Panc1 (cell line): ENCODE measurements at regions of chr10 and their contacts with region 1.

Region 1: GRCh38 chr10:50896721-50897120 is 11.3 kb upstream of the A1CF start:
- DNase-seq: no peak
- ATAC-seq: no peak
- H3K4me3 ChIP-seq: no peak overlapping the region
- H3K27ac ChIP-seq: no peak overlapping the region
- H3K4me1 ChIP-seq: no peaks in the 10 kb centered on the region
- H3K27me3 ChIP-seq: no peaks in the 10 kb centered on the region; the same call in 1 of the 2 replicates
- CTCF ChIP-seq: no peak

Region 2: GRCh38 chr10:50851884-50852671 is 44.6 kb before region 1 on chr10:
- CTCF ChIA-PET with region 1: no interaction called
- POLR2A ChIA-PET with region 1: no interaction called
- in situ Hi-C with region 1: no loop called
- intact Hi-C with region 1: loop called (anchors 1 kb)
- DNase-seq: no peak
- ATAC-seq: no peak
- H3K4me3 ChIP-seq: no peak overlapping the region
- H3K27ac ChIP-seq: no peak overlapping the region
- H3K4me1 ChIP-seq: no peaks in the 10 kb centered on the region
- H3K27me3 ChIP-seq: 0 out of 2 replicates have a peak, but pooled peaks cover 2% of the 10 kb centered on the region
- CTCF ChIP-seq: no peak